Activated naive CD4-positive, alpha-beta T cell treated with anti-CD3 and anti-CD28 coated beads for 36 hours (primary cell): ENCODE measurements at regions of chr4 and their contacts with region 1.

Region 1: GRCh38 chr4:94621491-94622080 is 136.2 kb upstream of the BMPR1B start:
- DNase-seq: peak; percentile 34
- H3K4me3 Mint-ChIP-seq: no peak overlapping the region
- H3K27ac Mint-ChIP-seq: no peak overlapping the region
- H3K4me1 Mint-ChIP-seq: no peaks in the 10 kb centered on the region
- H3K27me3 Mint-ChIP-seq: no peaks in the 10 kb centered on the region

Region 2: DNA sequence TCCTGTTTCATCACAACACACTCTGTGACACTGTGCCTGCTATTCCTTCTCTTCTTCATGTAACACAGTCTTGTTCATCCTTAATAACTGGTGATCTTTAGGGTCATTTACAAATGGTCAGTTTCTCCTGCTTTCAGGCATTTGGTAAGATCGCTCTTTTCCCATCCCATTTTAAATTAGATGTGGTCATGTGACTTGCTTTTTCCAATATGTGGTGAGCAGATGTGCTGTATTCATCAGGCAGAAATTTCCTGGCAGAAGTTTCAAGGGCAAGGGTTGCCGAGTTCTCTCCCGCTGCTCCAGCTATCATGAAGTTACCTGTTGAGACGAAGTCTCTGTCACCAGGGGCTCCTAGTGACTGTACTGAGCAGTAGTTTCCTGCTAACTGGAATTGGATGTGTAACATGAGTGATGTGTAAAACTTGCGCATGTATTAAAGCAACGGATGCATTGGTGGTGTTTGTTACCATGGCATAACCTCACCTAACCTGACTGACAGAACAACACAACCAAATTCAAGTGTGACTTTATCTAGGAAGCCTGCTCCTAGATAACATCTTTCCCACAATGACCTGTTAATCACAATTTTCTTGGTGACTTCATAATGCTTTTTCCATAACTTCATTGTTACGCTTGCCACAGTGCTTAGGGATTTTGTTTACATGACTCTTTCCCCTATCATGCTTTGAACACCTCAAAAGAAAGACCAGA is 106.6 kb after region 1 on chr4:
- CTCF ChIA-PET with region 1: no interaction called
- intact Hi-C with region 1: loop called (anchors 2 kb)
- DNase-seq: no peak
- H3K4me3 Mint-ChIP-seq: no peak overlapping the region
- H3K27ac Mint-ChIP-seq: no peak overlapping the region
- H3K4me1 Mint-ChIP-seq: no peaks in the 10 kb centered on the region
- H3K27me3 Mint-ChIP-seq: no peaks in the 10 kb centered on the region

Region 3: DNA sequence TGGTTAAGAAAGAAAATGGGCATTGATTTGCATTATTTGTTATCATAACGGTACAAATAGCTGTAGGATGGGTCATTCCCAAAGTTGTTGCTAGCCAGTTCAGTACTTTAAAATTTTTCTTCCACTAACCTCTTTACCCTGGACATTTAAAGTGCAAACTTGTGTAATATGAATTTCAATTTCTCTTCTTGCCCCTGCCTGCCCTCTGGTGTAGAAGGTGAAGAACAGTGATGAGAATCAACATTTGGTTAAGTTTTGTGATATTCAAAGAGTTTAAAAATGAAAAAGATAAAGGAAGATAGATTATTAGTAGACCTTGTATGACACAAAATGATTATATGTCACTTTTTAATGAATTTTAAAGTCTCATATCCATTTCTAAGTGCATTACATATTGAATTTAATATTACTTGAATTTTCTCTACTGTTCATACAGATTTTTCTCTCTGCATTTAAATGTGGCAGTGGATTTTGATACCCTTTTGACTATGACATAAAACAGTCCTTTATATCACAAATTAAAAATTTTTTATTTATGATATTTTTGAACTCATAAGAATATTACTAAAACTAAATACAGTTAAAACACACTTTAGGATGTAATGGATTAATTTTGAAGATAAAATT is 473.9 kb after region 1 on chr4:
- CTCF ChIA-PET with region 1: no interaction called
- intact Hi-C with region 1: loop called (anchors 1 kb)
- DNase-seq: peak; percentile 8
- H3K4me3 Mint-ChIP-seq: no peak overlapping the region
- H3K27ac Mint-ChIP-seq: no peak overlapping the region
- H3K4me1 Mint-ChIP-seq: peaks cover 4% of the 10 kb centered on the region
- H3K27me3 Mint-ChIP-seq: peaks cover 3% of the 10 kb centered on the region

Region 4: GRCh38 chr4:95124906-95125504 is 503.4 kb after region 1 on chr4:
- CTCF ChIA-PET with region 1: interaction called, 7 read pairs
- intact Hi-C with region 1: loop called (anchors 1 kb)
- DNase-seq: peak; percentile 19
- H3K4me3 Mint-ChIP-seq: no peak overlapping the region
- H3K27ac Mint-ChIP-seq: no peak overlapping the region
- H3K4me1 Mint-ChIP-seq: peaks cover 4% of the 10 kb centered on the region
- H3K27me3 Mint-ChIP-seq: peaks cover 3% of the 10 kb centered on the region